Activated naive CD4-positive, alpha-beta T cell treated with anti-CD3 and anti-CD28 coated beads for 36 hours (primary cell): ENCODE measurements at regions of chr15 and their contacts with region 1.

Region 1: DNA sequence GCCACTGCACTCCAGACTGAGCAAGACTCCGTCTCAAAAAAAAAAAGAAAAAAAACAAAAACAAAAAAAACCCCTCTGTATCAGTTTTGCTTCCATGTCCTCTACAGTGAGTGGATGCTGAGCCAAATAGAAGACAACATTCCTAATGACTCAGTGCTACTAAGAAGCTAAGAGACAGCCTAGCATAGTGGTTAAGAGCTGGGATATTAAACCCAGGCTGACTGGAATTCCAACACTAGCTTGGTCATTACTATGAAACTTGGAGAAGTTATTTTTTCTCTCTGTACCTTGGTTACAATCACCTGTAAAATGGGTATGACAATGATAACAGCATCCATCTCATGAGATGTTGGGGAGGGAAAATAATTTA is 60.9 kb upstream of the PYGO1 start:
- DNase-seq: no peak
- H3K4me3 Mint-ChIP-seq: no peak overlapping the region
- H3K27ac Mint-ChIP-seq: no peak overlapping the region
- H3K4me1 Mint-ChIP-seq: no peaks in the 10 kb centered on the region
- H3K27me3 Mint-ChIP-seq: no peaks in the 10 kb centered on the region

Region 2: GRCh38 chr15:55434989-55435825 is 213.8 kb before region 1 on chr15:
- CTCF ChIA-PET with region 1: no interaction called
- intact Hi-C with region 1: loop called (anchors 5 kb)
- DNase-seq: peak; percentile 14
- H3K4me3 Mint-ChIP-seq: no peak overlapping the region
- H3K27ac Mint-ChIP-seq: no peak overlapping the region
- H3K4me1 Mint-ChIP-seq: no peaks in the 10 kb centered on the region
- H3K27me3 Mint-ChIP-seq: no peaks in the 10 kb centered on the region

Region 3: GRCh38 chr15:55494931-55495330 is 154.1 kb before region 1 on chr15:
- CTCF ChIA-PET with region 1: no interaction called
- intact Hi-C with region 1: no loop called
- DNase-seq: no peak
- H3K4me3 Mint-ChIP-seq: no peak overlapping the region
- H3K27ac Mint-ChIP-seq: no peak overlapping the region
- H3K4me1 Mint-ChIP-seq: peaks cover 8% of the 10 kb centered on the region
- H3K27me3 Mint-ChIP-seq: no peaks in the 10 kb centered on the region

Region 4: GRCh38 chr15:55685286-55685685 is 36.2 kb after region 1 on chr15:
- CTCF ChIA-PET with region 1: no interaction called
- intact Hi-C with region 1: no loop called
- DNase-seq: no peak
- H3K4me3 Mint-ChIP-seq: no peak overlapping the region
- H3K27ac Mint-ChIP-seq: no peak overlapping the region
- H3K4me1 Mint-ChIP-seq: peaks cover 4% of the 10 kb centered on the region
- H3K27me3 Mint-ChIP-seq: peaks cover 6% of the 10 kb centered on the region

Region 5: DNA sequence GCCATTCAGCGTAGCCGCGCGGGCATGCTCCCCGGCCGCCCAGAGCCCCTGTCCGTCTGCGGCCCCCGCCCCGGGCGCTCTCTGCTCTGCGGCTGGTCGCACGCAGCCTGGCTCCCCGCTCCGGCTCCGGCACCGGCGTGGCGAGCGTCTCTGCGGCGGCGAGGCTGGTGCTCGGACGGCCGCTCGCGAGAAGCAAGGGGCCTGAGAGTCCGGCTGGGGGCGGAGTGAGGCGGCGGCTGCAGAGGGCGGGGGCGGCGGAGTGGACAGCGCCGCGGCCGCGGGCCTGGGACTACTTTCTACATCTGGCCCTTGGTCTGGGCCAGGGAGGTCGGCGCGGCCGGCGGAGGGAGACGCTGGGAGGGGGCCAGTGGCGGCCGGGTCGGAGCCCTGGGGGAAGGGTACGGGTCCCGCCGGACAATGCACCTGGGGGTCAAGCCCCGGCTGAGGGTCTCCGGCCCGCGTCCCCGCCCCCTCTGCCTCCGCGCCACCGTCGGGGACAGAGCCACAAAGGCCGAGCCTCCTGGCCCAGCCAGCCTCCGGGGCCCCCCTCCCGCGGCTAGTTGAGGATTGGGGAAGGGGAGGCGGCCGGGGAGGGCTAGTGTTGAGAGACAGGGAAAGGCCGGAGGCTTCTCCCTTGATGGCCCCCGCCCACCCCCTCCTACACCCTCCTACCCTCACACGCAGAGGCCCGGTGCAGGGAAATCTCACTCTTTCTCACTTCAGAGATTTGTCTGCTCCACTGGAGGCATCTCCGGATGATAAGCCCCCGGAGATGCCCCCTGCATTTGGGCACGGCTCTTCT is 94.1 kb after region 1 on chr15 and contains the start of gene PRTG:
- CTCF ChIA-PET with region 1: no interaction called
- intact Hi-C with region 1: loop called (anchors 1 kb)
- DNase-seq: no peak
- H3K4me3 Mint-ChIP-seq: peak within 1 kb of the TSS; percentile 61
- H3K27ac Mint-ChIP-seq: no peak within 1 kb of the TSS
- H3K4me1 Mint-ChIP-seq: peaks cover 3% of the 10 kb centered on the region
- H3K27me3 Mint-ChIP-seq: peaks cover 25% of the 10 kb centered on the region
- total RNA-seq, gene PRTG: not detected

Region 6: DNA sequence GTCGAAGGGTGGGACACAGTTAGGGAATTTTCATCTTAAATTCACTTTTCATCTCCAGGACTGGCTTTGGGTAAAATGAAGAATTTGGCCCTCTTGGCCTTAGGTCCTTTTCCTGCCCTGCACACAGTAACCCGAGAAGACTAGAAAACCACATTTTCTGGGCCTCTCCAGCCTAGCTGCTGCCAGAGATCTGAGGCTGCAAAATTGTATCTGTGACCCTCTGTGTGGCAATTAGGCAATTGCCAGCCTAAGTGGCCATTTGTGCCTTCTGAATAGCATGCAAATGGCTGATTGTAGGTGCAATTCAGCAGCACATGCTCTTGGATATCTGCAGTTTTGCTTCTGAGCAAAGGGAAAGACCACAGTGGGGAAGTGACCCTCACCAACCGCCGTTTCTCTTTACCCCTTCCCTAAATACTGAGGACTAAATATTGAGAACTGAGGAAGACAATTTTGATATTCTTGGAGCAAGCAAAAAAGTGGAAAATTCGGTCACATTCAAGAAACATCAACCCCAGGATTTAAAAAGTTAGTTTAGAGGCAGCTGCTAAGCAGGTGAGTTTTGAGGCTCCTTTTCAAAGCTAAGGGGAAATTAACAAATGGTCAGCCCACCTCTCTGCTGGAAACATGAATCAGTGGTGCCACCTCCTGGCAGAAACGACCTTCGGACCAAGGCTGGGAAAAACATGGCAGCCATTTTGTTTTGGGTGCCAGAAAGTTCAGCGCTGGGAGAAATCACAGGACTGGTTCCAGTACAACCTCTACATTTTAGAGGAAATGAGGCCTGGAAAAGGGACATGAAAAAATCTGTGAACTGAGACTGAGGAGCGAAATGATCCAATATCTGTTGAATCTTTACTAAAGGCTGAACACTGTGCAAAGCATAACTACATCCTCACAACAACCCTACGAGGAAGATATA is 150.5 kb after region 1 on chr15:
- CTCF ChIA-PET with region 1: interaction called, 5 read pairs
- intact Hi-C with region 1: loop called (anchors 1 kb)
- DNase-seq: peak; percentile 55
- H3K4me3 Mint-ChIP-seq: no peak overlapping the region
- H3K27ac Mint-ChIP-seq: no peak overlapping the region
- H3K4me1 Mint-ChIP-seq: no peaks in the 10 kb centered on the region
- H3K27me3 Mint-ChIP-seq: peaks cover 32% of the 10 kb centered on the region

Region 7: DNA sequence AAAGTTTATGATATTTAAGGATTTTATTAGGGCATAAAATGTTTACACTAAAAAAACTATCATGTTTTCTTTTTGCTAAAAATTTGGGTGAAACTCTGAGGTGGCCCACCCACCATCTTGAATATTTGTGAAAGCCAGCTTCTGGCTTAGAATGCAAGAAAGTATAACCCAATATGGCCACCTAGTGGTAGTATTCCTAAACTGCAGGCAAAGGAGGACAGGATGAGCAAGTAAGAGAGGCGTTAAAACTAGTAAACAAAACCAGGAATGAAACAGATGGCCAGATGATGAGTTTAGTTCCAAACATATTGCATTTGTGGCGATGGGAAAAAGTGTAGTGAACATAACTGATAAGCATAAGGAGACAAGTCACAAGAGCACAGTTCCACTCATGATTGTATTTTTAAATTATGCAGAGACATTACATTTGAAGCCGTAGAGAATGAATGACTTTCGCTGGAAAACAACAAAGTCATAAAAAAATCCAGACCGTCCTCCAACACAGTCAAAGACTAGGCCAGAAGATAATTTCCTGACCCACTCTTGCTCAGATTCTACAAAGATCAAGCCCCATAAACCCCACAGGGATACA is 197.2 kb after region 1 on chr15:
- CTCF ChIA-PET with region 1: interaction called, 20 read pairs
- intact Hi-C with region 1: loop called (anchors 1 kb)
- DNase-seq: peak; percentile 61
- H3K4me3 Mint-ChIP-seq: no peak overlapping the region
- H3K27ac Mint-ChIP-seq: no peak overlapping the region
- H3K4me1 Mint-ChIP-seq: no peaks in the 10 kb centered on the region
- H3K27me3 Mint-ChIP-seq: no peaks in the 10 kb centered on the region

Region 8: DNA sequence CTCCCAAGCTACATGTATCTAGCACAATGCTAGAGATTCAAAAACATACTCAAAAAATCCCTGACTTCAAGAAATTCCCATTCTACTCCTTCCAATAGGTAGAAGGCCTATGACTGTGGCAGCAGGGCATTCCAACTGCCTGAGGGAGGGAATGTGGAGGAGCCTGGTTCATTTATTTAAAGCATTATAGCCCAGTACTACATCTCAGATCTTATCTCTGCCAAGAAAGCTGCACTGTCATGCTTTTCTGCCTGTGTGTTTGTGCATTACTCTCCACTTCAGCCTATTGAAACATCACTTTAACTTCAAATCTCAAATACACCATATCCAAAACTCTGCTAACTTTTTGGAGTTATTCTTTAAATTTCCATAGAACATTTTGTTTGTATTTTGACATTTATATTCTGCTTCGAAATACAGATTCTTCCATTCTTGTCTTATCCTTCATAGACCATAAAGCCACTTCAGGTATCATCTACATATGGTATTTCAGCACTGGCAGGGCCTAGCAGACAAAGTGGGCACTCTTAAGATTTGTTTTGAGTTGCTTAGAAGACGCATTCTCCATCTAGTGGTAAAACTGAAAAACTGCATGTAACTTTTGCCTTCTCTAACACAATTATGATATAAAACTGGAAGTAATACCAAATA is 403.5 kb after region 1 on chr15:
- CTCF ChIA-PET with region 1: interaction called, 4 read pairs
- intact Hi-C with region 1: loop called (anchors 1 kb)
- DNase-seq: peak; percentile 21
- H3K4me3 Mint-ChIP-seq: no peak overlapping the region
- H3K27ac Mint-ChIP-seq: no peak overlapping the region
- H3K4me1 Mint-ChIP-seq: peaks cover 2% of the 10 kb centered on the region
- H3K27me3 Mint-ChIP-seq: no peaks in the 10 kb centered on the region

Region 9: GRCh38 chr15:56428821-56429458 is 779.9 kb after region 1 on chr15:
- CTCF ChIA-PET with region 1: no interaction called
- intact Hi-C with region 1: loop called (anchors 1 kb)
- DNase-seq: no peak
- H3K4me3 Mint-ChIP-seq: no peak overlapping the region
- H3K27ac Mint-ChIP-seq: no peak overlapping the region
- H3K4me1 Mint-ChIP-seq: no peaks in the 10 kb centered on the region
- H3K27me3 Mint-ChIP-seq: peaks cover 5% of the 10 kb centered on the region